ENCODE measurements at regions of chr5 and their contacts with region 1.

Region 1: DNA sequence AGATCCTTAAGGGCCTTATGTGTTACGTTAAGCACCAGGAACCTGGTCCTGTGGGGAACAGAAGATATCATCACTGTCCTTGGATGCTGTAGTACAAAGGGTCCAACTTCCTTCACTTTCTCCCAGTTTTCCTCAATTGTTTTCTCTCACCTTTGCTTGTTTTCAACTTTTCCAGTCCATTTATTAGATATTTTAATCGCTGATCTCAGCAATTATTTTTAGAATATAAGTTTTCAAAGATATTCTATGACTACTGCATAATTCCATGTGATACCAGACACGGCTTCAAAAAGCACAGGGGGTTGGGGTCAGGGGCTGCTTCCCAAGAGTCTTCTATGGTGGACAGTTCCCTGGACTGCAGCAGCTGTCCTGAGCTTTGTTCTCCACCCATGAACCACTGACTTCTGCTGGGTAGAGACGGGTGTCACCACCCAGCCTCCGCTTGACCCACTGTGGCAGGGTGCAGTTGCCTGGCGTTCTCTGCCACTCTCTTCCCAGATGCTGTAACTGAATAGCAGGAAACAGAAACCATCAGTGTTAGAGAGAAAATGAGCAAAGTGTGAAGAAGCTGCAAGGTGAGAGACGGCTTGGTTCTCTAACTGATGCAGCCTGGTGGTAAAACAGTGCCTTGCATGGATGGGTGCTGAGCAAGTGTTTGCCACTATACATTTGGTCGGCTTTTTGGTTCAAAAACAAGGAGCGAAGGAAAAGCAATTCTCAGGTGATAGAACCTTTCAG is 383.0 kb downstream of the RAB3C start:
- DNase-seq: no peak
- H3K4me3 Mint-ChIP-seq: no peak overlapping the region
- H3K27ac Mint-ChIP-seq: no peak overlapping the region
- H3K4me1 Mint-ChIP-seq: no peaks in the 10 kb centered on the region
- H3K27me3 Mint-ChIP-seq: peaks cover 21% of the 10 kb centered on the region
- CTCF ChIP-seq: no peak

Region 2: DNA sequence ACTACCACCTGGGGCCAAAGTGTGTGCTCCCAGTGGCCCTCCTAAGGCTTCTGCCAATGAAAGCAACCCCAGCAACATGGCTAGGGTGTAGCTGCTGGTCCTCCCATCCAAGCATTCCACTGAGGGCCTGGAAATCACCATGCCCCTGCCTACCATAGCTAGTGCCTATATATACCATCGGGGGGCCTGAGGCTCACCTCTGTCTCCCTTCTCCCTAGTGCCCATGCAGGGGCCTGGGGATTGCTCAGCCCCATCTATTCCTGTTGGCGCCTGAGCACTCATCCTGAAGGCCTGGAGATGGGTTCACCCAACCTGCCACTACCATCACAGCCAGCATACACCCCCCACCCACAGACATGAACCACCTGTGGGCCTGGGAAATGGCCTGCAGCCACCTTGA is 15.6 kb before region 1 on chr5:
- CTCF ChIA-PET with region 1: no interaction called
- intact Hi-C with region 1: no loop called
- DNase-seq: no peak
- H3K4me3 Mint-ChIP-seq: no peak overlapping the region
- H3K27ac Mint-ChIP-seq: no peak overlapping the region
- H3K4me1 Mint-ChIP-seq: no peaks in the 10 kb centered on the region
- H3K27me3 Mint-ChIP-seq: peaks cover 28% of the 10 kb centered on the region
- CTCF ChIP-seq: no peak

Region 3: DNA sequence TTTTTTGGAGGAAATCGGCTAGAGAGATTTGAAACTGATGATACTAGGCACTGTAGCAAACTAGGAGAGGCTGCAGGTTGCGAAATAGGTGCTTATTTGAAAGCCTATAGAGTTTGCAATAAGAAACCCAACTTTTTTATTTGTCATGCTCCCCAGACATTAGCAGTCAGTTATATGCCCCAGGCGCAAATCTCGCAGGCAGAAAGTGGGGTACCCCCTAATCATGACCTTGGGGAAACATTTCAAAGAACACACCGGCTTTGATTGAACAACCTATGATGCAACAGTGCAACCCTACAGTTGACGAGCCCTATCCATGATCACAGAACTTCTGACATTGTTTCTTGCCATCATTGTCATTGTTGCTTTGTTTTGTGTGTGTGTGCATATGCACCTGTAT is 127.5 kb after region 1 on chr5:
- CTCF ChIA-PET with region 1: no interaction called
- intact Hi-C with region 1: no loop called
- DNase-seq: no peak
- H3K4me3 Mint-ChIP-seq: peak overlapping the region; percentile 46
- H3K27ac Mint-ChIP-seq: no peak overlapping the region
- H3K4me1 Mint-ChIP-seq: peaks cover under 1% of the 10 kb centered on the region
- H3K27me3 Mint-ChIP-seq: no peaks in the 10 kb centered on the region
- CTCF ChIP-seq: no peak

Region 4: DNA sequence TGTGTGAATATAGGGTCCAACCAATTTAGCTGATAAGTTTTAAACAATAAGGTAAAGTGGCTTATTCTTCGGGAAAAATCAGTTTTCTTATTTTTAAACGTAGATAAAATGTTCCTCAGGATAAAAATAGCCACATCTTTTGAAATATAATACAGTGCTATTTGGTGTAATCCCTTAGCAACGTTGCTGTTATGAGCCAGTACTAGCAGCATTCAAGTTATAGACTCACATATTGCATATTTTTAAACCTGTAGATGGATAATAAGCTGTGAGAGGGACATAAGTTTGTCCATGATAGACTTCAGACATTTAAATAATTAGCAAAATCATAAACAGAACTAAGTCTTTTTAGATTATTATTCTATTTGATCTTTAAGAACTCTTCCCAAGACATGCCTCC is 921.4 kb after region 1 on chr5:
- CTCF ChIA-PET with region 1: no interaction called
- intact Hi-C with region 1: loop called (anchors 5 kb)
- DNase-seq: no peak
- H3K4me3 Mint-ChIP-seq: no peak overlapping the region
- H3K27ac Mint-ChIP-seq: no peak overlapping the region
- H3K4me1 Mint-ChIP-seq: no peaks in the 10 kb centered on the region
- H3K27me3 Mint-ChIP-seq: peaks cover 42% of the 10 kb centered on the region
- CTCF ChIP-seq: no peak